ENCODE measurements at regions of chr2 and their contacts with region 1.

Region 1: DNA sequence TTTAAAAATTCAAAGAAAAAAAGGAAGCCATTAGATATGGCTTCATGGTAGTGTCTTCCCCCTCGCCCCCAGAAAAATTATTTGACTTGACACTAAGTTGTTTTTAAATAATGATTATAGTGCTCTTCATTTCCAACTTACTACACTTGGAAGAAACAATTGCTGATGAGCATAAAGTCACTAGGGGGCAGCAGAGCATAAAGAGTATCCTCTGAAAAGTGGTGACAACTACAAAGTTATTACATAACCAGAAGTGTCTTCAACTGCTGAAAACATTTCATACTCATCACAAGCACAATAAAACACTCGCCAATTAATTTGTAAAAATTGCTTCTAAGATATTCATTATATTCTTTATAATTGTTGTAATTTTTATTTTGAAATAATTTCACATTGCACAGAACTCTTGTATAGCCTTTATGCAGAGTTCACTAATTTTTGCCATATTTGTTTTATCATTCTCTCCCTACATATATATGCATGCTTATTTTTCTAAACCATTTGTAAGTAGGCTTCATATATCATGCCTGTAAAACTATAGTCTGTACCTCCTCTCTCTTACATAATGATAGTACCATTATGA is 54.9 kb downstream of the EXOC6B start:
- DNase-seq: peak in 12 of 14 experiments; percentile 11 to 84 (median 46)
- ATAC-seq: peak; percentile 69
- H3K4me3 ChIP-seq: no peak overlapping the region
- H3K4me3 Mint-ChIP-seq: no peak overlapping the region
- H3K27ac ChIP-seq: no peak overlapping the region
- H3K27ac Mint-ChIP-seq: no peak overlapping the region
- H3K4me1 ChIP-seq: no peaks in the 10 kb centered on the region
- H3K4me1 Mint-ChIP-seq: no peaks in the 10 kb centered on the region
- H3K27me3 ChIP-seq: no peaks in the 10 kb centered on the region
- H3K27me3 Mint-ChIP-seq: no peaks in the 10 kb centered on the region
- CTCF ChIP-seq: peak; percentile 91

Region 2: DNA sequence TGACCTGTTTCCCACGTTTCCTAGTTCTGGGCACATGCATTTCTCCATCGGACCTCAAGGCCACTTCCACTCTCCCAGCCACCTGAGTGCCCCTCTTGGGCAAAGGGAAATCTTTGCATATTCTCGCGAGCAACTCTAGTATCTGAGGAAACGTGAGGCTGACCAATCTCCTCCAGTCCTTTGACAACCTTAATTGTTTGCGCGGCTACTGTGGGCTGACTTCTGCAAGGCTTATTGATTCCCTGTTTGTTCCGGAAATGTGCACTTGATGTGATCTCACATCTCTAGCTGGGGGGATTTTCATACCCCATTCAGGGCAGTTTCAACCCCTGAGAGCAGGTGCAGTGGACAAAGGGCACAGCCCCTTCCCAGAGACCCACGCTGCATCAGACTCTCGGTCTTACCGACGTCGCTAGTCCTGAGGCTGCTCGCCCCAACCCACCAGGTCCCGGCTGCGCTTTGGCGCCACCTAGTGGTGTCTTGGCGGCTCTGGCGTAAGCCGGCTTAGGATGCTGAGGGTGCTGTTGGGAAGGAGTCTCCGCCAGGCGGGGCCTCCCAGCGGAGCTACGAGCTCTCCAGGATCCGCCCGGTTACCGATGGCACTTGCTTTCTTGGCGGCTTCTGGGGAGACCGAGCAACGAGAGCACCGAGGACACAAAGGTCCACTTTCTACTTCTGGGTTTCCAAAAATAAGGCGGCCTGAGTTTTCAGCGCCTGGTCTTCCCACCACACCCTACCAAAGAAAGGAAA is 91.4 kb after region 1 on chr2:
- CTCF ChIA-PET with region 1: interaction called, 11 read pairs
- POLR2A ChIA-PET with region 1: no interaction called
- intact Hi-C with region 1: loop called (anchors 1 kb)
- DNase-seq: peak; percentile 72 to 92 (median 82)
- ATAC-seq: peak; percentile 93
- H3K4me3 ChIP-seq: peak overlapping the region; percentile 8
- H3K4me3 Mint-ChIP-seq: no peak overlapping the region
- H3K27ac ChIP-seq: no peak overlapping the region
- H3K27ac Mint-ChIP-seq: no peak overlapping the region
- H3K4me1 ChIP-seq: peaks cover 10% of the 10 kb centered on the region
- H3K4me1 Mint-ChIP-seq: peaks cover 6% of the 10 kb centered on the region
- H3K27me3 ChIP-seq: peaks cover 22 to 39% of the 10 kb centered on the region in 2 experiments
- H3K27me3 Mint-ChIP-seq: peaks cover 71% of the 10 kb centered on the region
- CTCF ChIP-seq: peak; percentile 99

Measured in CD4-positive, alpha-beta T cell (primary cell).